Breast epithelium (tissue), 4 donors: ENCODE measurements at regions of chr3 and their contacts with region 1.

Region 1: DNA sequence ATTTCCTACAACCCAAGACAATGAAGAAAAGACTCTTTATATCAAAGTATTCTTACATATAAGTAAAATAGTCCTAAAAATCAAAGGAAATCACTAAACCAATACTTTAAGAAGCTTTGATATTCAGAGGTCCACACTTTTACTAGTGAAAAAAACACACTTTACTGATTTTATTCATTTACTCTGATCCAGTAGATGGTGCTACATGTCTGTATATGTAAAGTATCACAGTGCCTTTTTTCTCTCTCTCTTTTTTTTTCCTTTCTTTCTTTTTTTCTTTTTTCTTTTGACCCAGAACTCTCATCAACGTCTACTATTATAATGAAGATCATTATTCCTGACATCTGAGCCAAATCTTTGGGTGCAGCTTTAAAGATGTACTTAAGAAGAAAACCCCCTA is 10.8 kb upstream of the CCDC39 start:
- DNase-seq: no peak
- H3K4me3 ChIP-seq: no peak overlapping the region
- H3K27ac ChIP-seq: no peak overlapping the region
- H3K4me1 ChIP-seq: no peaks in the 10 kb centered on the region
- H3K27me3 ChIP-seq: no peaks in the 10 kb centered on the region
- CTCF ChIP-seq: no peak
- POLR2A ChIP-seq: no peak

Region 2: DNA sequence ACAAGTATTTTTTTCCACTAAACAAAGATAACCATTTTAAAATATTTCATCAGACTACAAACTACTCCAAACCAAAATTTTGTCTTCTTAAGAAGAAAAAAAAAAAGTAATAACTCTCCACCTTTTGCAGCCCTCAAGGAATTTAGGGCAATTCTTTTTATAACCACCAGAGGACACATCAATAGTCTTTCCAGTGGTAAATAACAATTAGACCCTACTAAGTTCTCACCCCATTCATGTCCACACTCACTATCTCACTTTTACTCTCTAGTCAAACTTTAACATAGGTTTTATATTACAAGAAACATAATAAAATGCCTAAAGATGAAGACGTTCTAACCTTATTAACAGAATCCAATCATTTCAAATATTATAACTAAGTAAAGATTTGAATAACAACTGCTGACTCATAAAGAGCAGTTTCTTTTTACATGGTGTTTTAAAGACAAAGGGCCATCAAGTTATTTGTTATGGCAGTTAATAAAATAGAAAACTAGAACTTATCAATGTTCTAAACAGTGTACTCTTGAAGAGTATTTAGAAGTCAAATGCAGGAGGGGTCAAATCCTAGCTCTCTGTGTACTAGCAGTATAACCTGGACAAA is 43.8 kb before region 1 on chr3:
- intact Hi-C with region 1: no loop called
- DNase-seq: no peak
- H3K4me3 ChIP-seq: no peak overlapping the region
- H3K27ac ChIP-seq: no peak overlapping the region
- H3K4me1 ChIP-seq: no peaks in the 10 kb centered on the region
- H3K27me3 ChIP-seq: no peaks in the 10 kb centered on the region
- CTCF ChIP-seq: no peak
- POLR2A ChIP-seq: no peak

Region 3: GRCh38 chr3:180678231-180678630 is 11.8 kb before region 1 on chr3:
- intact Hi-C with region 1: loop called (anchors 1 kb)
- DNase-seq: no peak
- H3K4me3 ChIP-seq: no peak overlapping the region
- H3K27ac ChIP-seq: no peak overlapping the region
- H3K4me1 ChIP-seq: no peaks in the 10 kb centered on the region
- H3K27me3 ChIP-seq: no peaks in the 10 kb centered on the region
- CTCF ChIP-seq: no peak
- POLR2A ChIP-seq: no peak